CD8-positive, alpha-beta T cell (primary cell): ENCODE measurements at regions of chr12 and their contacts with region 1.

Region 1: DNA sequence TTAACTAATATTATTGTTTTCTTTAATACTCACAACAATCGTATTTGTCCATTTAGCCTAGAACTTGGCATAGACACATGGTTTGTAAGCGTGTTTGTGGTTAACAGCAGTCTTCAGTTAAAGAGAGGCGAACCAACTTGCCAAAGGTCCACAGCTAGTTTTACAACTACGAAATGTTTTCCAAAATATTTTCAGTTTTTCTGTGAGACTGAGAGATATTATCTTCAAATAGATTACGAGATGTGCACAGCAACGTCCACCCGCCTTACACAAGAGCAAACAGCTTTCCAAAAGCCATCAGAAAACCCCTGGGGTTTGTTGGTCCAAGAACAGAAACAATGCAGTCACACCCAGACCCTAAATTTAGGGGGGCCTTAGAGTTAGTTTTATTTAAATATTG is 58.6 kb upstream of the RASSF3 start:
- DNase-seq: no peak
- ATAC-seq: no peak
- H3K4me3 ChIP-seq: no peak overlapping the region
- H3K4me3 Mint-ChIP-seq: no peak overlapping the region
- H3K27ac ChIP-seq: no peak overlapping the region
- H3K27ac Mint-ChIP-seq: no peak overlapping the region
- H3K4me1 ChIP-seq: no peaks in the 10 kb centered on the region
- H3K4me1 Mint-ChIP-seq: peaks cover 8% of the 10 kb centered on the region
- H3K27me3 ChIP-seq: no peaks in the 10 kb centered on the region
- H3K27me3 Mint-ChIP-seq: no peaks in the 10 kb centered on the region
- CTCF ChIP-seq: no peak

Region 2: DNA sequence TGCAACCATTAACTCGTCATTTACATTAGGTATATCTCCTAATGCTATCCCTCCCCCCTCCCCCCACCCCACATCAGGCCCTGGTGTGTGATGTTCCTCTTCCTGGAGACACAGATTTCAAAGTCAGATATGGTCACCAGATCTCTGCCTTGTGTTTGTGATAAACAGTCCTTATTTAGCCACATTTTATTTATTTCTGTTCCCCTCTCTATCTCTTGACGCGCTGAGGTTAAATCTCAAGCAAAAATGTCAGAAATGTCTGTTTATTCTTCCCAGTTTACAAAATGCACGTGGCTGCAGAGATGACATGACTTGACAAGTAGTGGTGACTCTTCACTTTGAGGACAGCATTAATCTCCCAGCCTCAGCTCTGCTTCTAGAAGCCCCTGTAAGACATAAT is 47.1 kb after region 1 on chr12:
- CTCF ChIA-PET with region 1: interaction called, 15 read pairs
- POLR2A ChIA-PET with region 1: interaction called, 3 read pairs
- intact Hi-C with region 1: no loop called
- DNase-seq: no peak
- ATAC-seq: peak; percentile 6
- H3K4me3 ChIP-seq: no peak overlapping the region
- H3K4me3 Mint-ChIP-seq: no peak overlapping the region
- H3K27ac ChIP-seq: no peak overlapping the region
- H3K27ac Mint-ChIP-seq: no peak overlapping the region
- H3K4me1 ChIP-seq: peaks cover 34% of the 10 kb centered on the region
- H3K4me1 Mint-ChIP-seq: peaks cover 37% of the 10 kb centered on the region
- H3K27me3 ChIP-seq: no peaks in the 10 kb centered on the region
- H3K27me3 Mint-ChIP-seq: no peaks in the 10 kb centered on the region
- CTCF ChIP-seq: no peak

Region 3: DNA sequence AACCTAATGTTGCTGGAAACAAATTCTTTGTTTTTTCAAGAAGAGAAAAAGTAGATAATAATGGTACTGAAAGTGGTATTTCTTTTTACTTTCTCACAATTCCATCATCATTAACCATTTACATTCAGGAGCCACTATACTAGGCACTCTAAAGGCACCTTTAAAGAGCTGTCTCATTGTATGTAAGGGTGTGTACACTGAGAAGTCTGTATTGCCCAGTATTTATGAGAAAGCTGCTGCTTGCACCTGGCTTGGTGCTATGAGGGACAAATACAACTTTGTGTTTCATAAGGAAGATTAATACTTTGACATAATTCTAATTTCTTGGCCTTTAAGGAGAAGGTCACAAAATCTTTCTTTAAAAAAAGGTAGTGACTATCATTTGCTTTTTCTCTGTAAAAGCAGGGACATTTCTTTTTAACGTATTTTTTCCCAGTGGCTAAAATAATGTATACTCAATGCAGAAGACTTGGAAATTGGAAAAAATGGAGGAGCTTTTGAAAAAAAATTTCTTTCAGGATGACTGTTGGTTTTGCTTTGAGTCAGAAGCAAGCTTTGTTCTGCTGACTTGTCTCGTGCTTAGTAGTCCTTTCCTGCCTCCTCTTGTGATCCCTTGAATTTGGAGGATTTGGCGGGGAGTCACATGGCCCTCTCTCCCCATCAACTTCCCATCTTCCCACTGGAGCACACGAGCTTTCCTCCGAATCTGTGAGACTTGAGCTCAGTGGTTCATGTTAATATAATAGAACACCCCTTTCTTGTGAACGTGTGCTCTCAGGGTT is 108.7 kb after region 1 on chr12:
- CTCF ChIA-PET with region 1: interaction called, 14 read pairs
- POLR2A ChIA-PET with region 1: interaction called, 3 read pairs
- intact Hi-C with region 1: no loop called
- DNase-seq: no peak
- ATAC-seq: no peak
- H3K4me3 ChIP-seq: no peak overlapping the region
- H3K4me3 Mint-ChIP-seq: no peak overlapping the region
- H3K27ac ChIP-seq: peak overlapping the region in 1 of 2 experiments; percentile 21
- H3K27ac Mint-ChIP-seq: peak overlapping the region; percentile 83
- H3K4me1 ChIP-seq: peaks cover 79% of the 10 kb centered on the region
- H3K4me1 Mint-ChIP-seq: peaks cover 86% of the 10 kb centered on the region
- H3K27me3 ChIP-seq: no peaks in the 10 kb centered on the region
- H3K27me3 Mint-ChIP-seq: no peaks in the 10 kb centered on the region
- CTCF ChIP-seq: no peak

Region 4: DNA sequence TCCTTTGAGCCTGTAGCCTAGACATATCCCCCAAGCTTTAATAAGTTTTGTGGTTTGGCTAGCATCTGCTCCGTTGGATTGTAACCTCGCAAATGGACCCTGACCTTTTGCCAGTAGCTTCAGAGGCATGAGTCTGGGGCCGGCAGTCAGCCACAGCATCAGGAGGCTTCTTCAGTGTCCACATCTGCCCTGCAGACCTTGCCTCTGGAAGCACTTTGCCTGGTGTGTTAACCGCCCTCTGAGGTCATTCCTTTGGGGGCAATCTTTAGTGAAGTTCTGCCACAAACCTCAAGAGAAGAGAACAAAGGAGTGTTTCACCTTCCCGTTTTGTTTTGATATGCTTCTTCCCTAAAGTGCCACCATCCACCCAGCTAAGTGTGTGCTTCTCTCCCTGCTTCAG is 136.1 kb after region 1 on chr12:
- CTCF ChIA-PET with region 1: interaction called, 317 read pairs
- POLR2A ChIA-PET with region 1: interaction called, 6 read pairs
- intact Hi-C with region 1: no loop called
- DNase-seq: peak in 2 of 9 experiments; percentile 40 to 63
- ATAC-seq: peak; percentile 9
- H3K4me3 ChIP-seq: no peak overlapping the region
- H3K4me3 Mint-ChIP-seq: peak overlapping the region; percentile 67
- H3K27ac ChIP-seq: peak overlapping the region; percentile 26 to 57
- H3K27ac Mint-ChIP-seq: peak overlapping the region; percentile 94
- H3K4me1 ChIP-seq: peaks cover 95% of the 10 kb centered on the region
- H3K4me1 Mint-ChIP-seq: peaks cover 77% of the 10 kb centered on the region
- H3K27me3 ChIP-seq: no peaks in the 10 kb centered on the region
- H3K27me3 Mint-ChIP-seq: no peaks in the 10 kb centered on the region
- CTCF ChIP-seq: no peak

Region 5: DNA sequence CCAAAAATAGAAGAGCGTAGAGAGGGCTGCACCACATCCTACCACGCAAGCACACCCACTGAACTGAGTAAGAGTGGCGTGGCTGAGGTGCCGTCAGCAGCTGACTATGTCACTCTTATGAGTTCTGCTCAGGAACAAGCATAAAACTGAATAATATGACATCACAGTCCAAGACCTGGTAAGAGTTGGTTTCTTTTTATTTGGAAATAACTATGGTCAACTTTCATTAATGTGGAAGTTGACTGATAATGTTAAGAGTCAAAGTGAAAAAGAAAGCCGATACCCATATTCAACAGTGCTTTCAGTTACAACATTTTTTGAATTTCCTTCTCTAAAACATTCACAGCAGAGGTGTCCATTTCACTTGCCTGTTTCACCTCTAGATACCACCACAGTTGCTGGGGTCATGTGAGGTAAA is 162.9 kb after region 1 on chr12:
- CTCF ChIA-PET with region 1: interaction called, 11 read pairs
- POLR2A ChIA-PET with region 1: interaction called, 3 read pairs
- intact Hi-C with region 1: no loop called
- DNase-seq: peak in 5 of 9 experiments; percentile 20 to 79 (median 57)
- ATAC-seq: peak; percentile 94
- H3K4me3 ChIP-seq: no peak overlapping the region
- H3K4me3 Mint-ChIP-seq: no peak overlapping the region
- H3K27ac ChIP-seq: peak overlapping the region in 1 of 2 experiments; percentile 49
- H3K27ac Mint-ChIP-seq: peak overlapping the region; percentile 73
- H3K4me1 ChIP-seq: peaks cover 10% of the 10 kb centered on the region
- H3K4me1 Mint-ChIP-seq: peaks cover 31% of the 10 kb centered on the region
- H3K27me3 ChIP-seq: no peaks in the 10 kb centered on the region
- H3K27me3 Mint-ChIP-seq: no peaks in the 10 kb centered on the region
- CTCF ChIP-seq: no peak

Region 6: DNA sequence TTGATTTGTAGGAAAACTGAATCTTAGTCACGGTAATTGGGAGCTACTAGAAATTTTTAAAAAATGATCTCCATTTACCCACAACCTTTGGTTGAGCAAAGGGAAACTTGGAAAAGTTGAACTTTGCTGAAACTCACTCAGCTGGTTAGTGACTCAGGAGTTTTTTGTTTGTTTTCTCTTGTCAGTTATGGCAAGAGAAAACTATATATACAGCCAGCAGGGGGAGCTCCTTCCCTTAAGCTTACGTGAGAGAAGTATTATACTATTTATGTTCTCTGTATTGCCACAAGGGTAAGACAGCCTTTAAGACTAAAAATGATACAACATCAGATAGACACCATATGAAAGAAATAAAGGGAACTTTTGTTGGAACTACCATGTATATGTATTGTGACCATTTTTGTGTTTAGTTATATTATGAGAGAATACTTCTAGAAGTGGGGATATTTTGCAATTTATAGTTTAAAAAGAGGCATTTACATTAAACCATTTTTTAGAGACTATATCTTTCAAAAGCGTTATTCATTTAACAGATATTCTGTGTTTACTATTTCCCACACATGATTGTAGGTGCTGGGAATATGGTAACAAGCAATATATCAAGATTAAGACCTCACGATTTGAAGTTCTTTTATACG is 244.6 kb after region 1 on chr12:
- CTCF ChIA-PET with region 1: interaction called, 18 read pairs
- POLR2A ChIA-PET with region 1: no interaction called
- intact Hi-C with region 1: loop called in 1 of 2 experiments (anchors 5 kb)
- DNase-seq: peak in 8 of 9 experiments; percentile 30 to 83 (median 60)
- ATAC-seq: peak; percentile 86
- H3K4me3 ChIP-seq: no peak overlapping the region
- H3K4me3 Mint-ChIP-seq: no peak overlapping the region
- H3K27ac ChIP-seq: no peak overlapping the region
- H3K27ac Mint-ChIP-seq: no peak overlapping the region
- H3K4me1 ChIP-seq: no peaks in the 10 kb centered on the region
- H3K4me1 Mint-ChIP-seq: no peaks in the 10 kb centered on the region
- H3K27me3 ChIP-seq: peaks cover 0 to 3% of the 10 kb centered on the region in 2 experiments
- H3K27me3 Mint-ChIP-seq: peaks cover 16% of the 10 kb centered on the region
- CTCF ChIP-seq: peak; percentile 94

Region 7: GRCh38 chr12:64824500-64825142 is 272.9 kb after region 1 on chr12 and contains the start of gene TBC1D30:
- CTCF ChIA-PET with region 1: no interaction called
- POLR2A ChIA-PET with region 1: no interaction called
- intact Hi-C with region 1: no loop called
- DNase-seq: peak in 3 of 9 experiments; percentile 8 to 36 (median 10)
- ATAC-seq: peak; percentile 48
- H3K4me3 ChIP-seq: peak within 1 kb of the TSS; percentile 40 to 46
- H3K4me3 Mint-ChIP-seq: peak within 1 kb of the TSS; percentile 76
- H3K27ac ChIP-seq: no peak within 1 kb of the TSS
- H3K27ac Mint-ChIP-seq: no peak within 1 kb of the TSS
- H3K4me1 ChIP-seq: peaks cover 14% of the 10 kb centered on the region
- H3K4me1 Mint-ChIP-seq: peaks cover 17% of the 10 kb centered on the region
- H3K27me3 ChIP-seq: peaks cover 22 to 24% of the 10 kb centered on the region in 2 experiments
- H3K27me3 Mint-ChIP-seq: peaks cover 45% of the 10 kb centered on the region
- CTCF ChIP-seq: no peak
- total RNA-seq, gene TBC1D30: 0.14 to 0.28 TPM

Region 8: GRCh38 chr12:64864319-64864718 is 312.6 kb after region 1 on chr12:
- CTCF ChIA-PET with region 1: no interaction called
- POLR2A ChIA-PET with region 1: no interaction called
- intact Hi-C with region 1: no loop called
- DNase-seq: no peak
- ATAC-seq: no peak
- H3K4me3 ChIP-seq: no peak overlapping the region
- H3K4me3 Mint-ChIP-seq: no peak overlapping the region
- H3K27ac ChIP-seq: no peak overlapping the region
- H3K27ac Mint-ChIP-seq: no peak overlapping the region
- H3K4me1 ChIP-seq: no peaks in the 10 kb centered on the region
- H3K4me1 Mint-ChIP-seq: no peaks in the 10 kb centered on the region
- H3K27me3 ChIP-seq: no peaks in the 10 kb centered on the region
- H3K27me3 Mint-ChIP-seq: no peaks in the 10 kb centered on the region
- CTCF ChIP-seq: no peak